Dendritic cell treated with granulocyte-macrophage colony-stimulating factor and Interleukin-4, amounts not matched to agents 40 ng/mL and 50 ng/mL, for 4 days (primary cell): ENCODE measurements at regions of chr3 and their contacts with region 1.

Region 1: GRCh38 chr3:57078344-57078634 is 17.8 kb downstream of the SPATA12 start:
- H3K4me3 Mint-ChIP-seq: peak overlapping the region; percentile 73
- H3K27ac Mint-ChIP-seq: peak overlapping the region; percentile 11
- H3K4me1 Mint-ChIP-seq: peaks cover 39% of the 10 kb centered on the region
- H3K27me3 Mint-ChIP-seq: peaks cover 62% of the 10 kb centered on the region

Region 2: DNA sequence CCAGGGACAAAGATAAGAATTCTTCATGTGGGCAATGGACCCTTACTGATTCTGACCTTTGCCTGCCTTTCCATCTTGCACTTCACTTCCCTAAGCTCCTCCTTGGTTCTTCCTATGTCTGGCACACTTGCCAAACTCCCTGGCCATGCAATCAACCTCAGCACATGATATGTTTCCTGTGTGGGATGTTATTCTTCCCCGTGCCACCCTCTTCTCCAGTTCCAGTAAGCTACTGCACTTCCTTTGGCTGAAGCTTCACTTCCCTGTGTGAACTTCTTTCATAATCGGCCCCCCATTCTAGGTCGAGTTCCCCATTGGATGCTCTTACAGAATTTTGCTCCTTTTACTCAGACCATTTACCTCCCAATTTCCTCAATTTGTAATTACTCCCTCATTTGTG is 384.5 kb before region 1 on chr3:
- intact Hi-C with region 1: loop called (anchors 10 kb)
- H3K4me3 Mint-ChIP-seq: no peak overlapping the region
- H3K27ac Mint-ChIP-seq: peak overlapping the region; percentile 36
- H3K4me1 Mint-ChIP-seq: peaks cover 39% of the 10 kb centered on the region
- H3K27me3 Mint-ChIP-seq: no peaks in the 10 kb centered on the region

Region 3: GRCh38 chr3:56997675-56998074 is 80.6 kb before region 1 on chr3:
- intact Hi-C with region 1: loop called (anchors 5 kb)
- H3K4me3 Mint-ChIP-seq: no peak overlapping the region
- H3K27ac Mint-ChIP-seq: no peak overlapping the region
- H3K4me1 Mint-ChIP-seq: peaks cover 6% of the 10 kb centered on the region
- H3K27me3 Mint-ChIP-seq: peaks cover 6% of the 10 kb centered on the region